GM12878 (cell line): ENCODE measurements at regions of chr3 and their contacts with region 1.

Region 1: GRCh38 chr3:47096959-47097358 is 67.0 kb downstream of the SETD2 start:
- DNase-seq: no peak
- ATAC-seq: no peak
- H3K4me3 ChIP-seq: no peak overlapping the region
- H3K27ac ChIP-seq: no peak overlapping the region
- H3K4me1 ChIP-seq: no peaks in the 10 kb centered on the region
- H3K27me3 ChIP-seq: no peaks in the 10 kb centered on the region
- CTCF ChIP-seq: no peak
- EP300 ChIP-seq: no peak
- POLR2A ChIP-seq: no peak
- RAD21 ChIP-seq: no peak

Region 2: DNA sequence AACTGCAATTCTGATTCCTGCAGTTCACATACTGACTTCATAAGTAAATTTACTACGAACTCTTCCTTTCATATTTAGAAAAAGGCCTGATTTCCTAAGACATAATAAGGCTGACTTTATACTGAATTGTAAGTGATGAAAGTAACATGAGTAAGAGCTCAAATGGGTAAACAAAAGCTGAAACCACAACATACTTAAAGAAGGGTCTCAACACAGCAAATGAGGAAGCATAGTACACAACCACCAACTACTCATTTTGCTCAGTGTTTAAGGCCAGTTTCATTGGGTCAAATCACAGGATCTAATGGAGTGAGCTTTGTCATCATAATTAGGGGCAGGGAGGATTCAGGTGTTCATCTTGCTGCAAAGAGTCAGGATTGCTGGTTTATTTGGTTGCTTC is 14.4 kb before region 1 on chr3:
- CTCF ChIA-PET with region 1: interaction called, 4 read pairs
- POLR2A ChIA-PET with region 1: interaction called, 5 read pairs
- RAD21 ChIA-PET with region 1: interaction called, 6 read pairs
- SMC1A ChIA-PET with region 1: interaction called, 17 read pairs
- in situ Hi-C with region 1: no loop called
- intact Hi-C with region 1: no loop called
- DNase-seq: peak; percentile 51
- ATAC-seq: peak; percentile 95
- H3K4me3 ChIP-seq: no peak overlapping the region
- H3K27ac ChIP-seq: 0 out of 2 replicates have a peak overlapping the region, but pooled peaks have one; percentile 4
- H3K4me1 ChIP-seq: peaks cover 18% of the 10 kb centered on the region
- H3K27me3 ChIP-seq: no peaks in the 10 kb centered on the region
- CTCF ChIP-seq: no peak
- EP300 ChIP-seq: no peak
- POLR2A ChIP-seq: no peak
- RAD21 ChIP-seq: no peak